WTC11 (cell line): ENCODE measurements at regions of chr11 and their contacts with region 1.

Region 1: DNA sequence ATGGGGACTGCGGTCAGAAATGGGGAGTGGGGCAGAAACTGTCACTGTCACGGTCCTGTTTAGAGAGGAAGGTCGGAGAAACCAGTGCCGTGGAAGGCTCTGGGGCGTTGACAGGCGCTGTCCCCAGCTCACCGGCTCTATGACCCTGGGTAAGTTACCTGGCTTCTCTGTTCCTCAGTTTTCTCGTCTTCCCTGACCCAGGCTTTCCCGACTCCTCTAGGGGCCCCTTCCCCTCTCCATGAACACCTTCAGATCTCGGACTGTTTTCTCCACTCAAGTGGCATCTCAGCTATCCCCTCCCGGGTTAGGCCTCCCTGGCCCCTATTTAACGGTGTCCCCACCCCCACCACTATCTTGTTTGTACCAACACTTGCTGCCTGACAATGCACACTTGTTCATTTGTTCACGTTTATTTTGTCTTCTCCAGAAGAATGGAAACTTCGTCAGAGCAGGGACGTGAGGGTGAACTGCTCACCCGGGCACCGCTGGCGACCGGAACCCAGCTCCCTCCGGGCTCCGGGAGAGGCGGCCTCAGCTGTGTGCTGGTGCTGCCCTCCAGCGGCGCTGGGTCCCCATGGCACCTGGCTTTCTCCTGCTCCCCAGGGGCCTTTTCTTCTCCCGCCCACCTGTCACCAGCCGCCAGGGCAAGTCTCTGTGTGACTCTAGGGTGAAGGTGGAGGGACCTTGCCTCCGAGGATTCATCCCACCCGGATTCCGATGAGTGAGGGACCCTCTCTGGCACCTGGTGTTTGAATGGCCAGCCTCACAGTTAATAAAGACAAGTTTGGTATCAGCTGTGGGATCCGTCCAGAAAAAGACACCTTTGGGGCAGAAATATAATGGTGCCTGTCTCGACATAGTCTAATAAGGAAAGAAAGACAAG is 33.1 kb upstream of the SLC35C1 start:
- DNase-seq: peak; percentile 92
- ATAC-seq: peak; percentile 93
- H3K4me3 Mint-ChIP-seq: peak overlapping the region; percentile 78
- H3K27ac Mint-ChIP-seq: no peak overlapping the region
- H3K4me1 Mint-ChIP-seq: peaks cover 2% of the 10 kb centered on the region; the same call in 1 of the 2 replicates
- H3K27me3 Mint-ChIP-seq: peaks cover 12% of the 10 kb centered on the region
- CTCF ChIP-seq: peak; percentile 65

Region 2: GRCh38 chr11:45354976-45355705 is 416.7 kb before region 1 on chr11:
- CTCF ChIA-PET with region 1: interaction called, 14 read pairs
- POLR2A ChIA-PET with region 1: no interaction called
- DNase-seq: peak; percentile 86
- ATAC-seq: peak; percentile 92
- H3K4me3 Mint-ChIP-seq: peak overlapping the region; percentile 71
- H3K27ac Mint-ChIP-seq: peak overlapping the region; percentile 59
- H3K4me1 Mint-ChIP-seq: peaks cover 46% of the 10 kb centered on the region
- H3K27me3 Mint-ChIP-seq: peaks cover 9% of the 10 kb centered on the region; the same call in 1 of the 2 replicates
- CTCF ChIP-seq: no peak

Region 3: GRCh38 chr11:45411228-45411946 is 360.4 kb before region 1 on chr11:
- CTCF ChIA-PET with region 1: interaction called, 13 read pairs
- POLR2A ChIA-PET with region 1: no interaction called
- DNase-seq: no peak
- ATAC-seq: peak; percentile 17
- H3K4me3 Mint-ChIP-seq: peak overlapping the region; percentile 57
- H3K27ac Mint-ChIP-seq: peak overlapping the region; percentile 88
- H3K4me1 Mint-ChIP-seq: peaks cover 52% of the 10 kb centered on the region
- H3K27me3 Mint-ChIP-seq: peaks cover 6% of the 10 kb centered on the region; the same call in 1 of the 2 replicates
- CTCF ChIP-seq: no peak

Region 4: DNA sequence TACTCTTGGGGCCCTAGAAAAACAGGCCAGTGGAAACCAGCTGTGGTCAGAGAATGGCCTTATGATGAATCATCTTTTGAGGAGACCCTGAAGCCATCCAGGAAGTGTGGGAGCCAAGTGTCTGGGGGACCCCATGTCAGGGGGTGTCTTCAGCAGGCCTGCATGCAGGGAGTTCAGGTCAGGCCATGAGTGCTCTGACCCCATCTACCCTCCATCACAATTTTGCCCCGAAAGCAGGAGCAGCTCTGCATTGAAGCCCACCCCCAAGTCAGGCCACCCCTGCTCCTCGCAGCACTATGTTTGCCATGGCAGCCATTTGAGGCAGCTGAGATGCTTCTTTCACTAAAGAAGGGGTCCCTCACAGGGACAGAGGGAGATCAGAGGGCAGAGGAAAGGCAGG is 147.7 kb before region 1 on chr11:
- CTCF ChIA-PET with region 1: interaction called, 12 read pairs
- POLR2A ChIA-PET with region 1: no interaction called
- DNase-seq: no peak
- ATAC-seq: no peak
- H3K4me3 Mint-ChIP-seq: no peak overlapping the region
- H3K27ac Mint-ChIP-seq: no peak overlapping the region
- H3K4me1 Mint-ChIP-seq: no peaks in the 10 kb centered on the region
- H3K27me3 Mint-ChIP-seq: peaks cover 30% of the 10 kb centered on the region
- CTCF ChIP-seq: no peak

Region 5: GRCh38 chr11:45683271-45684058 is 88.3 kb before region 1 on chr11:
- CTCF ChIA-PET with region 1: interaction called, 38 read pairs
- POLR2A ChIA-PET with region 1: no interaction called
- DNase-seq: no peak
- ATAC-seq: no peak
- H3K4me3 Mint-ChIP-seq: no peak overlapping the region
- H3K27ac Mint-ChIP-seq: no peak overlapping the region
- H3K4me1 Mint-ChIP-seq: peaks cover 12% of the 10 kb centered on the region; the same call in 1 of the 2 replicates
- H3K27me3 Mint-ChIP-seq: peaks cover 3% of the 10 kb centered on the region; the same call in 1 of the 2 replicates
- CTCF ChIP-seq: no peak

Region 6: DNA sequence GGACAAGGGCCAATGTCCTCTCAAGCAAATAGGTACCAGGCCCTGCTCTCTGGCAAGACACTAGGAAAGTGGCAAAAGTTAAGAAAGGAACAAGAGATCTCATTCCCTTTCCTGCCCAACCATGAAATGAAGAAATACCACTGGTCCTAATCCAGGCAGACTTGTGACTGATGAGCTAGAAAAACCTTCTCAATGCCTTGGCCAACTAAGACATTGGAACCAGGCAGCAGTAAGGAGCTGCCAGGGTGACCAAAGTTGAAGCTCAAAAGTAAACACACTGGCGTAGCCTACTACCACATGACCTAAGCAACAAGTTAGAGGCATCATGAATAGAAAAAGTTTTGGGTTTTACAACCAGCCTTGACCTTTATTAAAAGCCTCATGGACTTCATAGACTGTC is 61.2 kb before region 1 on chr11:
- CTCF ChIA-PET with region 1: interaction called, 13 read pairs
- POLR2A ChIA-PET with region 1: no interaction called
- DNase-seq: no peak
- ATAC-seq: no peak
- H3K4me3 Mint-ChIP-seq: no peak overlapping the region
- H3K27ac Mint-ChIP-seq: no peak overlapping the region
- H3K4me1 Mint-ChIP-seq: peaks cover 22% of the 10 kb centered on the region
- H3K27me3 Mint-ChIP-seq: peaks cover 30% of the 10 kb centered on the region
- CTCF ChIP-seq: no peak

Region 7: DNA sequence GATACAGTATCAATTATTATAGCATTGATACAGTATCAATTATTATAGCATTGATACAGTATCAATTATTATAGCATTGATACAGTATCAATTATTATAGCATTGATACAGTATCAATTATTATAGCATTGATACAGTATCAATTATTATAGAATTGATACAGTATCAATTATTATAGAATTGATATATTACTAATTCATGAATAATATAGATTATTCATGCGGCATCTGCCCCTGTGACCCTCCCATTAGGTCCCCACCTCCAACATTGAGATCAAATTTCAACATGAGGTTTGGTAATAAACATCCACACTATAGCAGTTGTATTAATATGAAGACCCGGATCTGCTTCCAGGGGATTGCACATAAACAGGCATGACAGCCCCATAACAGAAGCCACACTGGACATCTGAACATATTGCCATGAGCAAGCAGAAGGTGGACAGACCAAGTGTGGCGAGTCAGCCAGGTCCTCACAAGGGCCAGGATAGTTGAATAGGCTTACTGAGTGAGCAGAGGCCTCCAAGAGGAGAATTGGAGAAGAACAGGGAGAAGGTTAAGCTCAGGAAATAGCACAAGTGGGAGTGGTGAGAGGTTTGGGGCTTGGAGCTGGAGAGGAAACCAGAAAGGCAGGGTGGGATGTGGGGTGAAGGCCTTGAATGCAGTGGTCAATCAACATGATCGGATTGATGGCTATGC is 43.8 kb after region 1 on chr11:
- CTCF ChIA-PET with region 1: interaction called, 32 read pairs
- POLR2A ChIA-PET with region 1: no interaction called
- DNase-seq: no peak
- ATAC-seq: peak; percentile 77
- H3K4me3 Mint-ChIP-seq: no peak overlapping the region
- H3K27ac Mint-ChIP-seq: peak overlapping the region; percentile 54; the same call in 1 of the 2 replicates
- H3K4me1 Mint-ChIP-seq: peaks cover 26% of the 10 kb centered on the region
- H3K27me3 Mint-ChIP-seq: peaks cover 22% of the 10 kb centered on the region
- CTCF ChIP-seq: no peak

Region 8: GRCh38 chr11:45988921-45989320 is 217.1 kb after region 1 on chr11:
- CTCF ChIA-PET with region 1: no interaction called
- POLR2A ChIA-PET with region 1: no interaction called
- DNase-seq: no peak
- ATAC-seq: no peak
- H3K4me3 Mint-ChIP-seq: no peak overlapping the region
- H3K27ac Mint-ChIP-seq: 0 out of 2 replicates have a peak overlapping the region, but pooled peaks have one; percentile 50
- H3K4me1 Mint-ChIP-seq: peaks cover 24% of the 10 kb centered on the region
- H3K27me3 Mint-ChIP-seq: no peaks in the 10 kb centered on the region
- CTCF ChIP-seq: no peak

Region 9: GRCh38 chr11:46009647-46010046 is 237.8 kb after region 1 on chr11:
- CTCF ChIA-PET with region 1: no interaction called
- POLR2A ChIA-PET with region 1: no interaction called
- DNase-seq: no peak
- ATAC-seq: no peak
- H3K4me3 Mint-ChIP-seq: no peak overlapping the region
- H3K27ac Mint-ChIP-seq: no peak overlapping the region
- H3K4me1 Mint-ChIP-seq: peaks cover 42% of the 10 kb centered on the region
- H3K27me3 Mint-ChIP-seq: no peaks in the 10 kb centered on the region
- CTCF ChIP-seq: no peak